HEK293 (cell line): ENCODE measurements at regions of chr16 and their contacts with region 1.

Region 1: GRCh38 chr16:31262084-31262483 is 2.3 kb downstream of the ITGAM start:
- H3K4me3 ChIP-seq: no peak overlapping the region
- H3K27ac ChIP-seq: no peak overlapping the region
- H3K4me1 ChIP-seq: no peaks in the 10 kb centered on the region
- CTCF ChIP-seq: no peak

Region 2: GRCh38 chr16:30964574-30965226 is 297.4 kb before region 1 on chr16:
- CTCF ChIA-PET with region 1: no interaction called
- POLR2A ChIA-PET with region 1: interaction called, 11 read pairs
- H3K4me3 ChIP-seq: no peak overlapping the region
- H3K27ac ChIP-seq: no peak overlapping the region
- H3K4me1 ChIP-seq: no peaks in the 10 kb centered on the region
- CTCF ChIP-seq: no peak

Region 3: GRCh38 chr16:31286421-31287032 is 24.4 kb after region 1 on chr16:
- CTCF ChIA-PET with region 1: no interaction called
- POLR2A ChIA-PET with region 1: no interaction called
- H3K4me3 ChIP-seq: no peak overlapping the region
- H3K27ac ChIP-seq: no peak overlapping the region
- H3K4me1 ChIP-seq: no peaks in the 10 kb centered on the region
- CTCF ChIP-seq: no peak